Dendritic cell treated with granulocyte-macrophage colony-stimulating factor and Interleukin-4, amounts not matched to agents 40 ng/mL and 50 ng/mL, for 4 days (primary cell): ENCODE measurements at regions of chr10 and their contacts with region 1.

Region 1: DNA sequence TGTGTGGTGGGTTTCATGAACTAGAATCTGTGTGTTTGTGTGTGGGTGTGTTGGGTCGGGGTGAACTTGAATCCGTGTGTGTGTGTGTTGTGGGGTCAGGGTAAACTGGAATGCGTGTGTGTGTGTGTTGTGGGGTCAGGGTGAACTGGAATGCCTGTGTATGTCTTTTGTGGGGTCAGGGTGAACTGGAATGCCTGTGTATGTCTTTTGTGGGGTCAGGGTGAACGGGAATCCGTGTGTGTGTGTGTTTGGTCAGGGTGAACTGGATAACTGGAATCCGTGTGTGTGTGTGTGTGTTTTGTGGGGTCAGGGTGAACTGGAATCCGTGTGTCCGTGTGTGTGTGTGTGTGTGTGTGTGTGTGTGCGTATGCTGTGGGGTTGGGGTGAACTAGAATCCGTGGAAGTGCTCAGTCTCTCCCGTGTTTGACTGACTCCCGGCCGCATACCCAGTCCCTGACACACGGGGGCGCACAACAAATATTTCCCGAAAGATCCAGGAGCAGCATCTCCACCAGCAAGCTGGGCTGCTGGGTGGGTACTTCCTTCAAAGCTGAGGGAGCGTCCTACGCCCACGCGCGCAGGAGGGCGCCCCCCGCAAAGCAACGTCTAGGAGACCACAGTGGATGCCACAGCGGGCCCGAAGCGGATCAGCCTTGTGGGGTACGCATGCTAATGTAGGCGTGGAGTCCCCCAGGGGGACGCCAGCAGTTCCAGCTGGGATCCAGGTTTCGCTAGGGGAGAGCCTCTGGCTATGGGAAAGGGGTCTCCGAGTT is 836 bp upstream of the CASP7 start:
- H3K4me3 Mint-ChIP-seq: peak overlapping the region; percentile 88
- H3K27ac Mint-ChIP-seq: peak overlapping the region; percentile 90
- H3K4me1 Mint-ChIP-seq: peaks cover 45% of the 10 kb centered on the region
- H3K27me3 Mint-ChIP-seq: peaks cover 10% of the 10 kb centered on the region

Region 2: DNA sequence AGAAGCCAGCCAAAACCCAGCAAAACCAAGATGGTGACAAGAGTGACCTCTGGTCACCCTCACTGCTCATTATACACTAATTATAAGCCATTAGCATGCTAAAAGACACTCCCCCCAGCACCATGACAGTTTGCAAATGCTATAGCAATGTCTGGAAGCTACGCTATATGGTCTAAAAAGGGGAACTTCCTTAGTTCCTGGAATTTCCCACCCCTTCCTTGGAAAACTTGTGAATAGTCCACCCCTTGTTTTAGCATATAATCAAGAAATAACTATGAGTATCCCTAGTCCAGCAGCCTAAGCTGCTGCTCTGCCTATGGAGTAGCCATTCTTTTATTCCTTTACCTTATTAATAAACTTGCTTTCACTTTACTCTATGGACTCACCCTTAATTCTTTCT is 16.8 kb after region 1 on chr10:
- intact Hi-C with region 1: loop called (anchors 2 kb)
- H3K4me3 Mint-ChIP-seq: no peak overlapping the region
- H3K27ac Mint-ChIP-seq: peak overlapping the region; percentile 47
- H3K4me1 Mint-ChIP-seq: peaks cover 23% of the 10 kb centered on the region
- H3K27me3 Mint-ChIP-seq: no peaks in the 10 kb centered on the region

Region 3: DNA sequence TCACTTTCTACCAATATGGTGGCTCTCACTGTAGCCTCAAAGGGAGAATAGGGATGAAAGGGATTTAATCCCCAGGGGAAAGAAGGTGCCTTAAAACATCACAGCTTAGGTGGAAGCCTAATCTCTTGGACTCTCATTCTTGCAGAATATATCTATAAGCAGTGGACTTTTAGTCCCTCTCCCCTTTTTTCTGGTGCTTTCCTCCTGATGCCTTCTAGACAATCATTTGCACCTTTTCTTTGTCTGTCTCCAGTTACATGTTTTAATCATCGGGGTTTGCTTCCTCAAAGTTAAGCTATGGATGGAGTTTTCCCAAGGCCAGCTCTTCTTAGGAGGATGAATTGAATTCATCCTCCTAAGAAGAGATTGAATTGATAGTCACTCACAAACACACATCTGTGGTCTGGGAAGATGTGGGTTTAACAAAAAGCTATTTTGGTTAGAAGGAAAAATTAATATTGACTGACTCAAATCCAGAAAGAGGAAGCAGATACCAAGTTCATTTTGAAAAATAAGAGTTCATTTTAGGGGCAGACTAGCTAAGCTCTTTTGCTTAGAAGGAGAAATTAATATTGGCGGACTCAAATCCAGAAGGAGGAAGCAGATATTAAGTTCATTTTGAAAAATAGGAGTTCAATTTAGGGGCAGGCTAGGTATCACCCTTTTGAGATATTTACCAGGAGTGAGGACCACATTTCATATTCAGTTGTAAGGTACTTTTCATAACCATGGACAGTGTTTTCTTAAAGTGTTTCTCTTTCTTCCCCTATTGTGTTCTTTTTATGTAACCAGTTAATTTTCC is 37.4 kb after region 1 on chr10:
- intact Hi-C with region 1: loop called (anchors 5 kb)
- H3K4me3 Mint-ChIP-seq: no peak overlapping the region
- H3K27ac Mint-ChIP-seq: no peak overlapping the region
- H3K4me1 Mint-ChIP-seq: peaks cover 17% of the 10 kb centered on the region
- H3K27me3 Mint-ChIP-seq: peaks cover 23% of the 10 kb centered on the region

Region 4: GRCh38 chr10:113854011-113854760 is 175.3 kb after region 1 on chr10 and contains the starts of genes DCLRE1A and NHLRC2:
- intact Hi-C with region 1: loop called (anchors 2 kb)
- H3K4me3 Mint-ChIP-seq: peak within 1 kb of the TSS; percentile 95
- H3K27ac Mint-ChIP-seq: peak within 1 kb of the TSS; percentile 98
- H3K4me1 Mint-ChIP-seq: peaks cover 15% of the 10 kb centered on the region
- H3K27me3 Mint-ChIP-seq: no peaks in the 10 kb centered on the region

Region 5: DNA sequence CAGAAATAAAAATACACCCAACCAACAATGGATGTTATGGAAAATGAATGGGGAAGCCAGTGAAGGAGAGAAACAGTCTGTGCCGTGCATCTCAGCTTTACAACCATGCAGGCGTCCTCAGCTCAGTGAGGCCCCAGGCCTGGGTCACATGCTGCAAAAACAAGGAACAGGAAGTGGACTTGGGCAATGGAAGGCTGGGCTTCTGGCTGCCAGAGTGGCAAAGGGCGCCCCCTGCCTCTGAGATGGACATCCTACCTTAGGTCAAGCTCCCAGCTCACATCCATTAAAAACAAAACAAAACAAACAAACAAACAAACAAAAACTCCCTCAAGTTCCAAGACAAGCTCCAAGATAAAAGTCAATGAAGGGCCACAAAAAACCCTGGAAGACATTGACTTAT is 780.1 kb after region 1 on chr10:
- intact Hi-C with region 1: no loop called
- H3K4me3 Mint-ChIP-seq: no peak overlapping the region
- H3K27ac Mint-ChIP-seq: no peak overlapping the region
- H3K4me1 Mint-ChIP-seq: peaks cover 6% of the 10 kb centered on the region
- H3K27me3 Mint-ChIP-seq: peaks cover 2% of the 10 kb centered on the region